ENCODE measurements at regions of chr11 and their contacts with region 1.

Region 1: DNA sequence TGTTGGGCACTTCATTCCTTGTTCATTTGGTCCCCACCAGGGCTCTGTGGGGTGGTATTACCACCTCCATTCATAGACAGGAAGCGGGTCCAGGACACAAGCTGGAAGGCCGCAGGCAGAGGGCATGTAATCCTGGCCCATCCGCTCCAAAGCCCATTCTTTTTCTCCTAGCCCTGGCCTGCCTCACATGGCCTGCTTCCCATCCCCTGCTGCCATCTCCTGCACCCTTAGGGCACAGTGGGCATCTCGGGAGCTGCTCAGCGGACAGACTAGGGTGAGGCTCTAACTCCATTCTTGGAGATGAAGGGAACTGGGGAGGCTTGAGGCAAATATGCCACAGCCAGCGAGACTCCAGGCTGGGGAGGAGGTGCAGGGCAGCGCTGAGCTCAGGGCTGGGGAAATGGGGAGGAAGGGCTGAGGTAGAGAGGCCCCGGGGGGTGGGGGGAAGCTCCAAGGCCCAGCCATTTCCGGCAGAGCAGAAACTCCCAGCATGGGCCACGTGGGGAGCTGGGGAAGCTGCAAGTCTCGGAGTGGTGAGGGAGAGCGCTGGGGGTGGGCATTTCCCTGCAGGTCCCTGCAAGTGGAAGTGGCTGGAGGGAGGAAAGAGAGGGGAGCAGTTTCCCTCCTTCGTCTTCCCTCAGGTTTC is 14.3 kb upstream of the BCL9L start:
- DNase-seq: no peak
- H3K4me3 Mint-ChIP-seq: no peak overlapping the region
- H3K27ac Mint-ChIP-seq: peak overlapping the region; percentile 72
- H3K4me1 Mint-ChIP-seq: peaks cover 11% of the 10 kb centered on the region
- H3K27me3 Mint-ChIP-seq: peaks cover 7% of the 10 kb centered on the region

Region 2: GRCh38 chr11:118401151-118401878 is 538.8 kb before region 1 on chr11 and contains the start of gene ATP5MG:
- intact Hi-C with region 1: no loop called
- DNase-seq: peak; percentile 88
- H3K4me3 Mint-ChIP-seq: peak within 1 kb of the TSS; percentile 99
- H3K27ac Mint-ChIP-seq: peak within 1 kb of the TSS; percentile 99
- H3K4me1 Mint-ChIP-seq: peaks cover 60% of the 10 kb centered on the region
- H3K27me3 Mint-ChIP-seq: no peaks in the 10 kb centered on the region
- total RNA-seq, gene ATP5MG: 237 and 266 TPM in 2 replicates

Region 3: GRCh38 chr11:118907051-118908042 is 32.7 kb before region 1 on chr11:
- intact Hi-C with region 1: loop called (anchors 5 kb)
- DNase-seq: peak; percentile 80
- H3K4me3 Mint-ChIP-seq: no peak overlapping the region
- H3K27ac Mint-ChIP-seq: no peak overlapping the region
- H3K4me1 Mint-ChIP-seq: peaks cover 26% of the 10 kb centered on the region
- H3K27me3 Mint-ChIP-seq: no peaks in the 10 kb centered on the region